ENCODE measurements at regions of chr6 and their contacts with region 1.

Region 1: DNA sequence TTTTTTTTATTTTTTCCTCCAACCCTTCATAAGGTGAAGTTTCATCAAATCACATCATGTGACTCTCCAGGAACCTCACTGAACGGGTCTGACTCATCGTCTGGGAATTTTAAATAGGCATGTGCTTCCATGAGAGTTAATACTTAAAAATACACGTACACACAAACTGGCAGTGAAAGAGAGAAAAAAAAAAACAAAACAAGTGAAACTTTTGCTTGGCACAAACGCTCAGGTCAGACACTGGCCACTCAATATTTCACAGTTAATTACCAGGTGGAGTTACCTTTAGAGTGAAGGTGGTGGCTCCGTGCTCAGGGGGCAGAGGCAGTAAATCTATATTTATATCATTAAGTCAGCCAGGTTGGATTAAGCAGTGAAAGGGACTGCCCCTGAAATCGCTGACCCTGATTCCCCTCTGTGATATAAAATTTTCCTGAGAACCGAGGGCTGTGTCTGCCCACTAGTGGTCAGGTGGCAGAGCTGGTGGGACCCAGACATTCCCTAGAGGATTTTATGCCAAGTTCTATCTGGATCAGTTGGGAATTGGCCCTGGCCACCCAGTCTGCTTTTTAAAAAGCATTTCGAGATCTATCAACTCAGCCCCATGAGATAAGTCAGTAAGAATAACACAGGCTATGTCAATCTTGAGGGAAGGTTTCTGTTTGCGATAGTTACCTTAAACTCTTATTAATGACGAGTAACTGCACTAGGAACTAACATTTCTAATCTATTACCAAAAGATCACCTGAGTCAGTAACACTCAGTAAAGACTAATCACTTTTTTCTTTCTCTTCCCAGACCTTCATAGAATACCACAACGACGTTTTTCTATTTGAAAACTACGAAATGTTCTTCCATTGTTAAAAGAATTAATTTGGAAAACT is 259.1 kb downstream of the HDGFL1 start:
- DNase-seq: peak; percentile 71 to 97
- H3K4me3 ChIP-seq: peak overlapping the region; percentile 27
- H3K27ac ChIP-seq: peak overlapping the region; percentile 83
- H3K4me1 ChIP-seq: peaks cover 37% of the 10 kb centered on the region
- H3K27me3 ChIP-seq: no peaks in the 10 kb centered on the region
- CTCF ChIP-seq: peak; percentile 77

Region 2: GRCh38 chr6:21022343-21023107 is 1805.9 kb before region 1 on chr6:
- CTCF ChIA-PET with region 1: no interaction called
- POLR2A ChIA-PET with region 1: no interaction called
- intact Hi-C with region 1: loop called (anchors 5 kb)
- DNase-seq: peak; percentile 62 to 77
- H3K4me3 ChIP-seq: no peak overlapping the region
- H3K27ac ChIP-seq: peak overlapping the region; percentile 78
- H3K4me1 ChIP-seq: peaks cover 26% of the 10 kb centered on the region
- H3K27me3 ChIP-seq: no peaks in the 10 kb centered on the region
- CTCF ChIP-seq: no peak

Region 3: GRCh38 chr6:21731411-21732031 is 1096.9 kb before region 1 on chr6:
- CTCF ChIA-PET with region 1: no interaction called
- POLR2A ChIA-PET with region 1: no interaction called
- intact Hi-C with region 1: loop called (anchors 5 kb)
- DNase-seq: peak; percentile 68 to 95
- H3K4me3 ChIP-seq: no peak overlapping the region
- H3K27ac ChIP-seq: peak overlapping the region; percentile 63
- H3K4me1 ChIP-seq: peaks cover 43% of the 10 kb centered on the region
- H3K27me3 ChIP-seq: no peaks in the 10 kb centered on the region
- CTCF ChIP-seq: no peak

Region 4: DNA sequence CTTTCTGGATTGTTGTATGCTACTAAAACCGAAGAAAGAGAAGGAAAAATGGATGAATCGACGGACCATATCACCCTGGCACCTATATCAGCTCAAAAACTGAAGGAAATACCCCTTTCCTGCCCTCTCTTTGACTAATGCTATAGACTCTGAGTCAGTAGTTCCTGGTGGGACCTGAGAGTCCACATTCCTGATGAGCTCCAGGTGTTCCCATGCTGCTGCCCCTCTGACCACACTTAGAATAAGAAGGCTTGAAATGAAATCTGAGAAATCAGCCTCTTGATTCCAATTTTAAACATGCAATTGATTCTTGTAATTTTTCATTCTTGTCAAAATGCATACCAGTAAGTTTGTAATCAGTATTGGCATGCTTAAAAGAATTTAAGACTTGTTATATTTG is 606.8 kb before region 1 on chr6:
- CTCF ChIA-PET with region 1: no interaction called
- POLR2A ChIA-PET with region 1: no interaction called
- intact Hi-C with region 1: loop called (anchors 5 kb)
- DNase-seq: peak; percentile 75 to 96
- H3K4me3 ChIP-seq: peak overlapping the region; percentile 48
- H3K27ac ChIP-seq: peak overlapping the region; percentile 98
- H3K4me1 ChIP-seq: peaks cover 40% of the 10 kb centered on the region
- H3K27me3 ChIP-seq: no peaks in the 10 kb centered on the region
- CTCF ChIP-seq: no peak

Region 5: DNA sequence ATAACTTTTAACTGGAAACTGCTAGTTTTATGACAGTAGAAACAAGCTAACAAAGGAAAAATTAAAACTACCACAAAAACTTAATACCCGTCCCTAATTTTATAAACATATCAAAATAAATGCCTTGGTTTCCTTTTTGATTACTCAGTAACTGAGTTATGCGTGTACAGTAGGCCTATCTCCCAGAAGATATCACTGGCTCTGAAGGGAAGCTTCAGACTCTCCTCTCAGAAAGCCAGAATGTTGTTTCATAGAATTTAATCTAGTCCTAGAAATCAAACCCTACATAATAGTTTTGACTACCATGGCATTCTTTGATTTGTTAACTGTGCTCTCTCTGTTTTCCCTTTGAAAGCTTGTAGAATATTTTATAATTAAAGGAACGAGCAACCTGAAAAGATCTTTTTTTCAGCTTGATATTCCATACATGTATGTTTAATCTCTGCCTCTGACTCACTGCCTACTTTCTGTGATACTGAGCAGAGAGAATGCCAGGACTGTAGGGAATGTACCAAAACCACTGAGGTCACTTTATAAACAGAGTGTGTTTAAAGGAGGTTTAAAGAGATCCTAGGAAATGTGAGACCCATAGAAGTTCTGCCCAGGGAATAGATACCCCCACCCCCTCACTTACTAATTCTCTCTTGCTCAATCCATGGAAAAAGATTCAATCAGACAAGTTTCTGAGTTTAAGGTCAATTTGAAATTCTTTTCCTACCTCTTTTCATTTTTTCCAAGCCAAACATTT is 52.4 kb after region 1 on chr6:
- CTCF ChIA-PET with region 1: no interaction called
- POLR2A ChIA-PET with region 1: no interaction called
- intact Hi-C with region 1: loop called (anchors 1 kb)
- DNase-seq: peak; percentile 39 to 94
- H3K4me3 ChIP-seq: no peak overlapping the region
- H3K27ac ChIP-seq: peak overlapping the region; percentile 95
- H3K4me1 ChIP-seq: peaks cover 17% of the 10 kb centered on the region
- H3K27me3 ChIP-seq: no peaks in the 10 kb centered on the region
- CTCF ChIP-seq: no peak

Region 6: DNA sequence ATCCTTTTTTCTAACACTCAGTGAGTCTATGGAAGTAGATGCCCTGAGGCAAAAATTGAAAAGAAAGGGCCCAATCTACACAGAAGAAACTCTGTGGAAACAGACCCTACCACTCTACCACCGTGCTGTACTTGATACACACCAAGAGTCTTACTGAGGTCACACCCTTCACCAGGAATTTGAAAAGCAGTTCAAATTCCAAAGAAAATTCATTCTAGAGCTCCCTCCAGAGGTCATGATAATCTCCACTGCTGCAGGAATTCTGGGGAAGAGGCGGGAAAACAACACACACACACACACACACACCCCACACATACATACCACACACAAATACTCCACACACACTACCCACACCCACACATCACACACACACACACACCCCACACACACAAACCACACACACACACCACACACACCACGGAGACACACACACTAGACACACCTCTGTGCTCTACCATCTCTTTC is 77.7 kb after region 1 on chr6:
- CTCF ChIA-PET with region 1: no interaction called
- POLR2A ChIA-PET with region 1: no interaction called
- intact Hi-C with region 1: loop called (anchors 2 kb)
- DNase-seq: no peak
- H3K4me3 ChIP-seq: no peak overlapping the region
- H3K27ac ChIP-seq: no peak overlapping the region
- H3K4me1 ChIP-seq: no peaks in the 10 kb centered on the region; the same call in 1 of the 2 replicates
- H3K27me3 ChIP-seq: no peaks in the 10 kb centered on the region
- CTCF ChIP-seq: peak; percentile 49; the same call in 1 of the 2 replicates